ENCODE measurements at regions of chr21 and their contacts with region 1.

Region 1: DNA sequence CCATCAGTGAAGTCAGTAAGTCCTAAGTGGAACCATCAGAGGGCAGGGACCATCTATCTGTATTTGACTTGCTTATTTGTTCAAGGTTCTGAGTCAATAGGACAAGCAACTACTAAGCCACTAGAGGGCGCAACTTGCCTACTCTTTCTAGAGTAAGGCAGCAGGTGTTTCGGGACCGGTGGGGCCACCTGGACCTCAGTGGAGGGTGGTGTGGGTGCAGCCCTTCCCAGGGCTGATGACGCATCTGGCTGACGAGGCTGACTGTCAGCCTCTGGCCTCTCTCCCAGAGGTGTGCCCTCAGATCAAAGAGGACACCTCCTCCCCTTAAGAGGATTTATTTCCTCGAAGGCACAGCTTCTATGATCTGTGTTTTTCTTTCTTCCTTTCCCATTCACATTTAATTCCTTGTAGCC is 6.6 kb downstream of the CBR3 start:
- DNase-seq: peak; percentile 70
- H3K4me3 Mint-ChIP-seq: no peak overlapping the region
- H3K27ac Mint-ChIP-seq: no peak overlapping the region
- H3K4me1 Mint-ChIP-seq: peaks cover 18% of the 10 kb centered on the region
- H3K27me3 Mint-ChIP-seq: no peaks in the 10 kb centered on the region

Region 2: DNA sequence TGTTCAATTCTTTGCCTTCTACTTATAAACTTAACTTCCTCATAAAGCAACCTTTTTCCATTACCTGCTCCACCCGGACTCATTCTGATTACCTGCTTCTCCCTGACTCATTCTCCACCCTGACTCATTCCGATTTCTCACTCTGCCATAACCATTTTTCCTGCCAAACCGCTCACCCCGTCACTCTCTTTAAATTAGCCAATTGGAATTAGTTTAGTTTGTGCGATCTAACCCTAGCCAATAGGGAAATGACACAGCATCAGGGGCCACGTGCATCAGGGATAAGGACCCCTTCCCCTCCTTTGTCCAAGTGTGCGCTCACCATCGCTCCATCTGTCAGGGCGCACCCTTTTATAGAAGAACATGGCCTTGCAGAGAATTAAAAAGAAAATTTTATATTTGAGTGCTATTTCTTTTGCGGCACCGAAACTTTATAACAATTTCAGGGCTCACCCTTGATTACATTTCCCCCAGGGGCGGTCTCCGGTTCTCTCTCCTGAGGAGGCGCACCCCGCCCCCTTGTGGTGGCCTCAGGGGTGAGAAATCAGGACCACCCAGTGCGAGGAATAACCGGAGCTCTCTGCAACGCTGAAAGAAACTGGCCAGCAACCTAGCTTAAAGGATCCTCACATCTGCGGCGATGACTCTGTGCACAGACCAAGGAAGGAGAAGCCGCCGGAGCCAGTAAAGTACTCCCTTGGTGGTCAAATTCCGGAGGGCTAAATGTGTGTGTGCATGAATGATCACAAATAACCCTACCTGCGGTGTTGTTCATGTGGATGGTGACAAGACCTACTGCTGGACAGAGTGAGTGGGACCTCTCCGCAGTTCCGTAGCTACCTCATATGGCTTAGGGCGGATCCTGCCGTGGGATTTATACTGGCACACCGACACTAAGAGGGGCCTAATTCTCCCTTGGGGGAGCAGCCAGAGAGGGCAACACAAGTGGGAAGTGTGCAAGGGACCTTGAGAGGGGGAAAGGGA is 36.9 kb before region 1 on chr21:
- intact Hi-C with region 1: no loop called
- DNase-seq: no peak
- H3K4me3 Mint-ChIP-seq: peak overlapping the region; percentile 67
- H3K27ac Mint-ChIP-seq: peak overlapping the region; percentile 54
- H3K4me1 Mint-ChIP-seq: peaks cover 11% of the 10 kb centered on the region
- H3K27me3 Mint-ChIP-seq: peaks cover 36% of the 10 kb centered on the region

Region 3: GRCh38 chr21:36209626-36210171 is 68.2 kb after region 1 on chr21:
- intact Hi-C with region 1: loop called (anchors 1 kb)
- DNase-seq: peak; percentile 13
- H3K4me3 Mint-ChIP-seq: no peak overlapping the region
- H3K27ac Mint-ChIP-seq: no peak overlapping the region
- H3K4me1 Mint-ChIP-seq: peaks cover 28% of the 10 kb centered on the region
- H3K27me3 Mint-ChIP-seq: no peaks in the 10 kb centered on the region

Region 4: GRCh38 chr21:36330904-36331303 is 189.4 kb after region 1 on chr21:
- intact Hi-C with region 1: loop called (anchors 1 kb)
- DNase-seq: no peak
- H3K4me3 Mint-ChIP-seq: no peak overlapping the region
- H3K27ac Mint-ChIP-seq: no peak overlapping the region
- H3K4me1 Mint-ChIP-seq: peaks cover 23% of the 10 kb centered on the region
- H3K27me3 Mint-ChIP-seq: no peaks in the 10 kb centered on the region